ENCODE measurements at regions of chr19 and their contacts with region 1.

Region 1: GRCh38 chr19:984165-984967 is at the start of gene WDR18:
- DNase-seq: peak; percentile 93 to 96
- H3K4me3 ChIP-seq: peak within 1 kb of the TSS; percentile 94 to 96
- H3K27ac ChIP-seq: peak within 1 kb of the TSS; percentile 82 to 87
- H3K4me1 ChIP-seq: peaks cover 0 to 35% (median 20%) of the 10 kb centered on the region in 4 donors
- H3K27me3 ChIP-seq: peaks cover 0 to 11% of the 10 kb centered on the region in 2 donors
- CTCF ChIP-seq: peak in 1 of 2 experiments; percentile 44

Region 2: DNA sequence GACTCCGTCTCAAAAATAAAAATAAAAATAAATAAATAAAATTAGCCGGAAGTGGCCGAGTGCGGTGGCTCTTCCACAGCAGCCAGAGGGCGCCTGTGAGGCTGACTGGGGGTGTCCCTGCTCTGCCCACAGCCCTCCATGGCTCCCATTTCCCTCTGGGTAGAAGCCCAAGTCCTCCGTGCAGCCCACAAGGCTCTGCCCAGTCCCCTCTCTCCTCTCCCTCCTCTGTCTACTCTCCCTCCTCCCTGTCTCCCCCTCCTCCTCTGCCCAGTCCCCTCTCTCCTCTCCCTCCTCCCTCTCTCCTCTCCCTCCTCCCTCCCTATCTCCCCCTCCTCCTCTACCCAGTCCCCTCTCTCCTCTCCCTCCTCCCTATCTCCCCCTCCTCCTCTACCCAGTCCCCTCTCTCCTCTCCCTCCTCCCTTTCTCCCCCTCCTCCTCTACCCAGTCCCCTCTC is 213.0 kb before region 1 on chr19:
- intact Hi-C with region 1: loop called (anchors 5 kb)
- DNase-seq: no peak
- H3K4me3 ChIP-seq: no peak overlapping the region
- H3K27ac ChIP-seq: no peak overlapping the region
- H3K4me1 ChIP-seq: peaks cover 0 to 10% (median 4%) of the 10 kb centered on the region in 4 donors
- H3K27me3 ChIP-seq: peaks cover 0 to 21% of the 10 kb centered on the region in 2 donors
- CTCF ChIP-seq: peak in 1 of 2 experiments; percentile 33

Region 3: GRCh38 chr19:850221-850978 is 134.0 kb before region 1 on chr19:
- intact Hi-C with region 1: loop called (anchors 10 kb)
- DNase-seq: peak; percentile 93 to 96
- H3K4me3 ChIP-seq: peak overlapping the region in 1 of 2 donors; percentile 33
- H3K27ac ChIP-seq: peak overlapping the region; percentile 66
- H3K4me1 ChIP-seq: peaks cover 0 to 25% (median 14%) of the 10 kb centered on the region in 4 donors
- H3K27me3 ChIP-seq: peaks cover 0 to 69% of the 10 kb centered on the region in 2 donors
- CTCF ChIP-seq: no peak

Measured in tibial artery (tissue), 4 donors.